Activated CD4-positive, alpha-beta T cell treated with anti-CD3 and anti-CD28 coated beads for 36 hours (primary cell): ENCODE measurements at regions of chr7 and their contacts with region 1.

Region 1: DNA sequence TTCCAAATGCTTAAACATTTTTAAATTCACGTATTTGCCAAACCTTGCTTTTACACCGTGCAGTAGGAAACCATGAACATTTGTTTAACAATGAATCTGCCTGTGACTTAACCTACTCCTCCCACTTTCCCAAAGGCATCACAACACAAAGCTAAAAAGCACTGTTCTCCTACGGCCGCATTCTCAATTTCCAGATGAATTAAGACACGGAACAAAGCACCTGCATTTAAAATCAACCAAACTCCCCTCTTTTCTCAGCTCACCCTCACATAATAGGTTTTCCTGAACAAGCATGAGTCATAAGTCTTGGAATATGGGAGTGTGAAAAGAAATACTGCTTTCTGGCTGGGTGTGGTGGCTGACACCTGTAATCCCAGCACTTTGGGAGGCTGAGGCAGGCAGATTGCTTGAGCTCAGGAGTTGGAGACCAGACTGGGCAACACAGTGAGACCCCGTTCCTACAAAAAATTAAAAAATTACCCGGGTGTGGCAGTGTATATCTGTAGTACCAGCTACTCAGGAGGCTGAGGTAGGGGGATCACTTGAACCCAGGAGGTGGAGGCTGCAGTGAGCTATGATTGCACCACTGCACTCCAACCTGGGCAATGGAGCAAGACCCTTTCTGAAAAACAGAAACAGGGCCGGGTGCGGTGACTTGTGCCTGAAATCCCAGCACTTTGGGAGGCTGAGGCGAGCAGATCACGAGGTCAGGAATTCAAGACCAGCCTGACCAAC is 51.7 kb upstream of the CYTH3 start:
- DNase-seq: no peak
- ATAC-seq: no peak
- H3K4me3 Mint-ChIP-seq: no peak overlapping the region
- H3K27ac Mint-ChIP-seq: no peak overlapping the region
- H3K4me1 Mint-ChIP-seq: peaks cover 3% of the 10 kb centered on the region
- H3K27me3 Mint-ChIP-seq: no peaks in the 10 kb centered on the region

Region 2: GRCh38 chr7:5854738-5855137 is 469.4 kb before region 1 on chr7:
- CTCF ChIA-PET with region 1: interaction called, 11 read pairs
- POLR2A ChIA-PET with region 1: no interaction called
- intact Hi-C with region 1: loop called in 1 of 2 experiments (anchors 1 kb)
- DNase-seq: no peak
- ATAC-seq: no peak
- H3K4me3 Mint-ChIP-seq: no peak overlapping the region
- H3K27ac Mint-ChIP-seq: no peak overlapping the region
- H3K4me1 Mint-ChIP-seq: peaks cover 18% of the 10 kb centered on the region
- H3K27me3 Mint-ChIP-seq: no peaks in the 10 kb centered on the region

Region 3: GRCh38 chr7:5997222-5997808 is 326.8 kb before region 1 on chr7:
- CTCF ChIA-PET with region 1: interaction called, 9 read pairs
- POLR2A ChIA-PET with region 1: interaction called, 5 read pairs
- intact Hi-C with region 1: loop called (anchors 1 to 2 kb)
- DNase-seq: peak; percentile 54
- ATAC-seq: peak; percentile 55
- H3K4me3 Mint-ChIP-seq: no peak overlapping the region
- H3K27ac Mint-ChIP-seq: no peak overlapping the region
- H3K4me1 Mint-ChIP-seq: no peaks in the 10 kb centered on the region
- H3K27me3 Mint-ChIP-seq: no peaks in the 10 kb centered on the region

Region 4: GRCh38 chr7:6160191-6160623 is 163.9 kb before region 1 on chr7:
- CTCF ChIA-PET with region 1: interaction called, 8 read pairs
- POLR2A ChIA-PET with region 1: no interaction called
- intact Hi-C with region 1: loop called (anchors 1 to 5 kb)
- DNase-seq: peak; percentile 23
- ATAC-seq: no peak
- H3K4me3 Mint-ChIP-seq: no peak overlapping the region
- H3K27ac Mint-ChIP-seq: no peak overlapping the region
- H3K4me1 Mint-ChIP-seq: peaks cover 2% of the 10 kb centered on the region
- H3K27me3 Mint-ChIP-seq: no peaks in the 10 kb centered on the region

Region 5: GRCh38 chr7:6338551-6339274 is 14.6 kb after region 1 on chr7:
- CTCF ChIA-PET with region 1: interaction called, 14 read pairs
- POLR2A ChIA-PET with region 1: no interaction called
- intact Hi-C with region 1: no loop called
- DNase-seq: no peak
- ATAC-seq: no peak
- H3K4me3 Mint-ChIP-seq: no peak overlapping the region
- H3K27ac Mint-ChIP-seq: no peak overlapping the region
- H3K4me1 Mint-ChIP-seq: peaks cover 4% of the 10 kb centered on the region
- H3K27me3 Mint-ChIP-seq: no peaks in the 10 kb centered on the region